ENCODE measurements at regions of chr6 and their contacts with region 1.

Region 1: DNA sequence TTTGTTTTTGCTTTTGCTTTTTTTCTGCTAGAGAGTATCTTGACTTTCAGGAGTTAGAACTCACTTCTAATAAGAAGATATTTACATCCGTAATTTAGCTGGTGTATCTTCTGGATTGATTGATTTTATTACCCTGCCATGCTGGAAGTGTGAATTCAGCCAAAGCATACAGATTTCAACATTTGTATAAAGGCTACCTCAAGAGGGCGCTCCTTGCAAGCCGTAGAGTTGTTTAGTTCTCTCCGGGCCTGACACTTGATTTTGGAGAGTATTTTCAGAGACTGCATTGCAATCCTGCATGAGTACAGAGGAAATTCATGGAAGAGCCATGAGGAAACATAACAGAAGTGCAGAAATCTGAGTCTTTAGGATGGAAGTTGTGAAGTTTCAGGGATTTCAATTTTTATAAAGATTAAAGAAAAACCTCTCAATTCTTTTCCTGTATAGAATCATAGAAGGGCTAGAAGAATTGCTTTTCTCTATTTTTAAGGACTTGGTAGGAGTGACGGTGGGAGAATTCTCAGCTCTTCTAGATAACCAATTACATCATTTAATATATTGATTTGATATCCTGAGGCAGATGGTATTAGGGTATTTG is 66.7 kb upstream of the TIAM2 start:
- DNase-seq: peak; percentile 12
- ATAC-seq: peak; percentile 94
- H3K4me3 ChIP-seq: no peak overlapping the region
- H3K27ac ChIP-seq: no peak overlapping the region
- H3K4me1 ChIP-seq: 0 out of 2 replicates have a peak, but pooled peaks cover 2% of the 10 kb centered on the region
- H3K27me3 ChIP-seq: no peaks in the 10 kb centered on the region
- CTCF ChIP-seq: peak; percentile 72 to 90 (median 76)
- EP300 ChIP-seq: no peak
- POLR2A ChIP-seq: no peak
- RAD21 ChIP-seq: peak; percentile 98

Region 2: DNA sequence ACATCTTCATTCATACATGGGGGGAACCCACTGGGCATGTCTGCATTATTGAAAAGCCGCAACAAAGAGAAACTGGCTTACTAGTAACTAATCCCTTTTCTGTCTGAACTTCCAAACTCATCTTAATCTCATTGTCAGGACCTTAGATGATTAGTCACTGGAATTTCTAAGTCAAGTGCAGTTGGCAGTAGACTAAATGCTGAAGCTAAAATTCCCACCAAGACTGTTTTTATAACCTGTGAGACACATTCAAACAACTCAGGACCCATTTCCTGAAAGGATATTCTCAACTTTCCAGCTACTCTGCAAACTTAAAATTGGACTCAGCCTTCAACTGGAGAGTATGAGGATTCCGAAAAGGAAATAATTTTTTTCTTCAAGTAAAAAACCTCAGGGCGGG is 290.1 kb before region 1 on chr6:
- CTCF ChIA-PET with region 1: no interaction called
- POLR2A ChIA-PET with region 1: no interaction called
- RAD21 ChIA-PET with region 1: no interaction called
- SMC1A ChIA-PET with region 1: no interaction called
- in situ Hi-C with region 1: no loop called
- intact Hi-C with region 1: no loop called
- DNase-seq: no peak
- ATAC-seq: no peak
- H3K4me3 ChIP-seq: no peak overlapping the region
- H3K27ac ChIP-seq: no peak overlapping the region
- H3K4me1 ChIP-seq: no peaks in the 10 kb centered on the region
- H3K27me3 ChIP-seq: no peaks in the 10 kb centered on the region
- CTCF ChIP-seq: no peak
- EP300 ChIP-seq: no peak
- POLR2A ChIP-seq: no peak
- RAD21 ChIP-seq: no peak

Region 3: DNA sequence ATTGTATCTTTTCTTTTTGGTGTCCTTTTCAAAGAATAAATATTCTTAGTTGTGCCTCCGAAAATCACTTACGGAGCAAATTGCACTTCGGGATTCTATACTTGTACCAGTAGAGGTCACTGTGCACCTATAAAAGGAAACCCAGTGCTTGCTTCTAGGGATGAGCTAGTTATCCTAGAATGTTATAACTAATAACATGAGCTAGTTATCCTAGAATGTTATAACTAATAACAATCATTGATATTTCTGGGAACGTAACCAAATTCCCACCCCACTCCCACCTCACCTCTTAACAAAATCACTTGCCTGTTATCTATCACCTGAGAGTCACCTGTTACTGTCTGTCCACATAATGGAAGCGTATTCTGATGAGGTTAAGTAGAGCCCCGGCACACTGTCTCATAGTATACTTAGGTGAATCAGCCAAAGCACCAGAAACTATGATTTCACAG is 60.3 kb before region 1 on chr6:
- CTCF ChIA-PET with region 1: interaction called, 19 read pairs
- POLR2A ChIA-PET with region 1: no interaction called
- RAD21 ChIA-PET with region 1: interaction called, 3 read pairs
- SMC1A ChIA-PET with region 1: interaction called, 5 read pairs
- in situ Hi-C with region 1: no loop called
- intact Hi-C with region 1: loop called (anchors 5 kb)
- DNase-seq: no peak
- ATAC-seq: no peak
- H3K4me3 ChIP-seq: no peak overlapping the region
- H3K27ac ChIP-seq: no peak overlapping the region
- H3K4me1 ChIP-seq: no peaks in the 10 kb centered on the region
- H3K27me3 ChIP-seq: no peaks in the 10 kb centered on the region
- CTCF ChIP-seq: peak; percentile 32 to 47 (median 45); a peak in 5 of 6 replicates
- EP300 ChIP-seq: no peak
- POLR2A ChIP-seq: no peak
- RAD21 ChIP-seq: peak; percentile 62

Region 4: GRCh38 chr6:155165029-155165710 is 236.7 kb after region 1 on chr6:
- CTCF ChIA-PET with region 1: interaction called, 206 read pairs
- POLR2A ChIA-PET with region 1: no interaction called
- RAD21 ChIA-PET with region 1: interaction called, 116 read pairs
- SMC1A ChIA-PET with region 1: interaction called, 150 read pairs
- in situ Hi-C with region 1: loop called (anchors 5 kb)
- intact Hi-C with region 1: no loop called
- DNase-seq: no peak
- ATAC-seq: peak; percentile 54
- H3K4me3 ChIP-seq: no peak overlapping the region
- H3K27ac ChIP-seq: no peak overlapping the region
- H3K4me1 ChIP-seq: peaks cover 4% of the 10 kb centered on the region
- H3K27me3 ChIP-seq: no peaks in the 10 kb centered on the region
- CTCF ChIP-seq: no peak
- EP300 ChIP-seq: no peak
- POLR2A ChIP-seq: no peak
- RAD21 ChIP-seq: no peak

Region 5: DNA sequence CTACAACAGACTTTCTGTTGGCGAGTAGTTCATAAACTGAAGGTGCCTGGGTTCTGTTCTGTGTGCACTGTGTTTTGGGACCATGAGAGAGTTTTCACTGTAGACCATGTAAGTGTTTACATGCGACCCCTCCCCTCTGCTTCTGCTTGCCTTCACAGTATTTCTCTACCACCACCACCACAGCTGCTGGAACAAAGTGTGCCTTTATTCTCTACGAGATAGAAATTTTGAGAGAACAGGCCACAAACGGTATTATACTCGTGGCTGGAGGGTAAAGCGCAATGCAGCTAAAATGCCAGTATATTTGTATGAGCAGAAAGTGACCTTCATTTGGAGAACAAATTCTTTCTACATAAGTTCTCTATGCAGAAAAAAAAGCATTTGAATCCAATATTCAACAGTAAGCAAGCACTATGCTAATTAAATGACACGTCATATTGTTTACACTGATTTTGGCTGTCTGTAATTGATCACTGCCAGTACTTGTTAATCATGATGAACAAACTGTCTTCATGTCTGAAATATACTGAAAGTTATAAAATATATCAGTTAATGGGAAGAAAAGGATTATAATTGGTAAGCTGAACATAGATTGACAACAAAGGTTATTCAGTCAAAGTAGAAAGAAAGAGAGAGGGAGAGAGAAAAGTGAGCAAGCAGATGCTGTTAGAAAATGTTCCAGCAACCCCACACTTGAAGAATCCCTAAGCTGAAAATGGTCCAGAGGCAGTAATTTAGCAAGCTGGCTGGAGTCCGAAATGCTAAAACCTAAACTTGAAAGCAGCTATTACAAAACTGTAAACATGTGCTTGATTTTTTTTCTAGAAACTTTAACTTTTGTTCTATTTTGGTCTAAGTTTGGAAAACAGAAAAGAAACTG is 344.2 kb after region 1 on chr6:
- CTCF ChIA-PET with region 1: interaction called, 11 read pairs
- POLR2A ChIA-PET with region 1: no interaction called
- RAD21 ChIA-PET with region 1: interaction called, 3 read pairs
- SMC1A ChIA-PET with region 1: interaction called, 4 read pairs
- in situ Hi-C with region 1: no loop called
- intact Hi-C with region 1: no loop called
- DNase-seq: no peak
- ATAC-seq: no peak
- H3K4me3 ChIP-seq: no peak overlapping the region
- H3K27ac ChIP-seq: no peak overlapping the region
- H3K4me1 ChIP-seq: no peaks in the 10 kb centered on the region
- H3K27me3 ChIP-seq: no peaks in the 10 kb centered on the region
- CTCF ChIP-seq: no peak
- EP300 ChIP-seq: no peak
- POLR2A ChIP-seq: no peak
- RAD21 ChIP-seq: no peak

Region 6: DNA sequence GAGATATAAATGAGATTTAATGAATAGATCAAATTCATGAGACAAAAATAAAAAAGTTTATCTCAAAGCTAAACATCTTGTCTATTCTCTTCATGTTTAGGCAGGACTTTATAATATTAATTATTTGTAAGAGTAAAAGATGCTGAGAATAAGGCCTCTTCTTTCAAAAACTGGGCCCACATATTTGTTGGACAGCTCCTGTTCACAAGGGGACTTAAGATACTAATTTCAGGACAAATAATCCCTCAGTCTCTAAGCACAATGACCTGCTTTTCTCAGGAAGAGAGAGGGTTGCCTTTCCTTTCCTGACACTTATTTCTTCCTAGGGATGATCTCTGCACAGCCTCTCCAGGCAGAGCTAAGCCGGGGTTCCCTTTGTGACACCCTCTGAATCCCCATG is 483.9 kb after region 1 on chr6:
- CTCF ChIA-PET with region 1: no interaction called
- POLR2A ChIA-PET with region 1: no interaction called
- RAD21 ChIA-PET with region 1: no interaction called
- SMC1A ChIA-PET with region 1: no interaction called
- in situ Hi-C with region 1: no loop called
- intact Hi-C with region 1: no loop called
- DNase-seq: no peak
- ATAC-seq: no peak
- H3K4me3 ChIP-seq: no peak overlapping the region
- H3K27ac ChIP-seq: no peak overlapping the region
- H3K4me1 ChIP-seq: 0 out of 2 replicates have a peak, but pooled peaks cover 2% of the 10 kb centered on the region
- H3K27me3 ChIP-seq: no peaks in the 10 kb centered on the region
- CTCF ChIP-seq: no peak
- EP300 ChIP-seq: no peak
- POLR2A ChIP-seq: no peak
- RAD21 ChIP-seq: no peak

Measured in GM12878 (cell line).